Activated CD4-positive, alpha-beta memory T cell treated with anti-CD3 and anti-CD28 coated beads for 36 hours (primary cell): ENCODE measurements at regions of chr5 and their contacts with region 1.

Region 1: DNA sequence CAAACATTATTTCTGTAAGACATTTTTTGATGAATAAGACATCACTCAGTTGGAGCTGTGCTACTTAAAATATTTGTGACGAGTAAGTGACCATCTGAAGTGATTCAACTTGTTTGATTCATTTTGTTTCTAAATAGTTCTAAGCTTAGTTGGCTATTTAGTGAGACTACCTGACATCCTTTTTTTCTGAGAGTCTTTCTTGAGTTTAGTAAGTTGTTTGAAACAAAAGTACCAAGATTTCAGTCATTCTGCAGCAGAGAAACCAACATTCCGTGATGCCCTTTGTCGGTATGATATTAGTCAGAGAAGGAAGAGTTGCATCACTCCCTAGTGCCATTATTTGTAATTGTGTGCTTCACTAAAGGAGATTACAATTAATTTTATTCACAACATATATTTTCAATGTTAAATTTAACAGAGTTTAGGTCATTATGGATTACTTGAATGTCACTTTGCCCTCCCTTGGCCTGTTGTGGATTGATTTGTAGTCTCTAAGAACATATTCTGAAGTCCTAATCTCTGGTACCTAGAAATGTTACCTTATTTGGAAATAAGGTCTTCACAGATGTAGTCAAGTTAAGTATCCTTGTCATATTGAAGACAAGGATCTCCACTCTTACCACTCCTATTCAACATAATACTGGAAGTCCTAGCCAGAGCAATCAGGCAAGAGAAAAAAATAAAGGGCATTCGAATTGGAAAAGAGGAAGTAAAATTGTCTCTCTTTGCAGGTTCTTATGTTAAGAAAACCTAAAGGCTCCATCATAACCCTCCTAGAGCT is 212.2 kb downstream of the PCSK1 start:
- DNase-seq: peak; percentile 37
- H3K4me3 Mint-ChIP-seq: no peak overlapping the region
- H3K27ac Mint-ChIP-seq: peak overlapping the region; percentile 78
- H3K4me1 Mint-ChIP-seq: peaks cover 22% of the 10 kb centered on the region
- H3K27me3 Mint-ChIP-seq: peaks cover 3% of the 10 kb centered on the region

Region 2: GRCh38 chr5:95858661-95859326 is 362.0 kb before region 1 on chr5:
- CTCF ChIA-PET with region 1: no interaction called
- POLR2A ChIA-PET with region 1: no interaction called
- intact Hi-C with region 1: loop called (anchors 1 kb)
- DNase-seq: peak; percentile 97
- H3K4me3 Mint-ChIP-seq: peak overlapping the region; percentile 40
- H3K27ac Mint-ChIP-seq: peak overlapping the region; percentile 68
- H3K4me1 Mint-ChIP-seq: peaks cover 55% of the 10 kb centered on the region
- H3K27me3 Mint-ChIP-seq: no peaks in the 10 kb centered on the region

Region 3: DNA sequence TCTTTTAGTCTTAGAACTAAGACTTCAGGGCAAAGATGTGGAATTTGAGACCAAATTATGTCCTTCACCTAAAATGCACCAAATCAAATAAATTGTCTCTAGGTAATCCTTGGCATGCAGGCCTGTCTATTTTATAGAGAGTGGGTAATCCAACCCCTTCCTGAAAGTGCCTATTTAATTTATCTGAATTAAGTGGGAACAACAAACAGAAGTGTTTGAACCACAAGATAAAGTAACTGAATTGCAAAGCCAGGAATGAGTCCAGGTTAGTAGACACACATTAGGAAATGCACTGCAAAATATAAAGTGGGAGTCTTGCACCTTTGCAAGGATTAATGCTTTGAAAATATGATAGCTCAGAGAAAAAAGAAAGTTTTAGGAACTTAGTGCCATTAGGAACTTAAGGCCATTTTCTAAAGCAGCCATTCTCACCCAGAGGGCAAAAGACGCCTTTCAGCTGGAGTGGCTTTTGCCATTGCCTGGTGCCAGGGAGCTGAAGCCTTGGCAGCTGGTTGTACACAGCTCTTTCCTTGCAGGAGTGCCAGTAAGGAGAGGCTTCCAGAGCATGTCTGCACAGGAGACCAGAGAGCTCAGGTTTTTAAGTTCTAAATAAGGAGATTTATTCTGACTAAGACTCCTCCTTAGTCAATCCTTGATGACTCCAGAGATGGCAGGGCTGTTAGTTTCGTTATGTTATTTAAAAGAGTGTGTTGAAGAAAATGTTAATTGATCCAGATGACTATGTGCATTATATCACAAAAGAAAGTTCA is 107.4 kb before region 1 on chr5:
- CTCF ChIA-PET with region 1: no interaction called
- POLR2A ChIA-PET with region 1: no interaction called
- intact Hi-C with region 1: loop called (anchors 1 kb)
- DNase-seq: peak; percentile 13
- H3K4me3 Mint-ChIP-seq: no peak overlapping the region
- H3K27ac Mint-ChIP-seq: no peak overlapping the region
- H3K4me1 Mint-ChIP-seq: peaks cover 41% of the 10 kb centered on the region
- H3K27me3 Mint-ChIP-seq: peaks cover 4% of the 10 kb centered on the region

Region 4: DNA sequence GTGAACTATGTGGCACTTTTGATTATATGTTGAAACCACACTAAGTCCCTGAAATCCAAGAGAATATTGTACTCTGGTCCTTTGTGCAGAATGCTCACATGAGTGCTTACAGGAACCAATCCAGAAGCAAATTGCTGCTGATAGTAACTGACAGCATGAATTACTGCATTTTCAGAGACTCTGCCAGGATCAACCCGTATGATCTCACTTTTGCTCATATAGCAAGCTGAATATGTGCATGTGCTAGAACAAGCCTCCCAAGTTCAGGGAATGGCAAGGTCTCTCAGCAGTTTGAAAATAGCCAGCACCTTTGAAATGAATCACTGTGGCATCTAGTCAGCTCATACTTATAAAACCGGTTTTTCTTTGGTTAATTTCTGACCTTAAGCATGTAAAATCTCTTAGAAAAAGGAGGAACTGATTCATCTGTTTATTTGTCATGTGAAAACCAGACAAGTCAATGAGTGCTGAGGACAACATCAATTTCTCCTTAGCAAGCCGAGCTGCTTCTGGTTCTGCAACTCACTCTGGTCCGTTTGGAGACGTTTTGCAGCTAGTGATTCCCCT is 43.4 kb before region 1 on chr5:
- CTCF ChIA-PET with region 1: no interaction called
- POLR2A ChIA-PET with region 1: no interaction called
- intact Hi-C with region 1: loop called (anchors 1 kb)
- DNase-seq: peak; percentile 14
- H3K4me3 Mint-ChIP-seq: no peak overlapping the region
- H3K27ac Mint-ChIP-seq: no peak overlapping the region
- H3K4me1 Mint-ChIP-seq: no peaks in the 10 kb centered on the region
- H3K27me3 Mint-ChIP-seq: peaks cover 9% of the 10 kb centered on the region

Region 5: DNA sequence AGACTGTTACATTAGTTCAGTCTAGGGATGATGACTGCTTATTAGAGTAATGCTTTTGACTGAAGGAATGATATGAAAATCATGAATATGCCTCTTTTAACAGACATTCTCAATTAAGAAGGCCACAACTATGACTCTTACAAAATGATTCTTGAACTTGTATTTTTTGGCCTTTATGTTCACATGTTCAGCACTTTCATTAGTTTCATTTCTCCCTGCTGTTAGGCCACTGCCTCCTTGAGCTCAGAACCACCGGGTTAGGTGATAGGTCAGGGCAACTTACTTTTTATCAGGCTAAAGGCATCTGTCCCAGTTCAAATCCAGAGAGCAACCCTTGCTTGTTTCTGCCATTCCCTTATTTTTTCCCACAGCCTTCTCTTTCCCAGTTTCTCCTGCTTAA is 23.9 kb before region 1 on chr5:
- CTCF ChIA-PET with region 1: no interaction called
- POLR2A ChIA-PET with region 1: no interaction called
- intact Hi-C with region 1: no loop called
- DNase-seq: no peak
- H3K4me3 Mint-ChIP-seq: no peak overlapping the region
- H3K27ac Mint-ChIP-seq: no peak overlapping the region
- H3K4me1 Mint-ChIP-seq: no peaks in the 10 kb centered on the region
- H3K27me3 Mint-ChIP-seq: peaks cover 3% of the 10 kb centered on the region

Region 6: GRCh38 chr5:96235008-96235910 is 14.5 kb after region 1 on chr5:
- CTCF ChIA-PET with region 1: no interaction called
- POLR2A ChIA-PET with region 1: no interaction called
- intact Hi-C with region 1: no loop called
- DNase-seq: no peak
- H3K4me3 Mint-ChIP-seq: no peak overlapping the region
- H3K27ac Mint-ChIP-seq: no peak overlapping the region
- H3K4me1 Mint-ChIP-seq: no peaks in the 10 kb centered on the region
- H3K27me3 Mint-ChIP-seq: peaks cover 7% of the 10 kb centered on the region

Region 7: GRCh38 chr5:96288166-96288844 is 67.5 kb after region 1 on chr5:
- CTCF ChIA-PET with region 1: no interaction called
- POLR2A ChIA-PET with region 1: no interaction called
- intact Hi-C with region 1: loop called (anchors 2 kb)
- DNase-seq: no peak
- H3K4me3 Mint-ChIP-seq: no peak overlapping the region
- H3K27ac Mint-ChIP-seq: no peak overlapping the region
- H3K4me1 Mint-ChIP-seq: peaks cover 6% of the 10 kb centered on the region
- H3K27me3 Mint-ChIP-seq: peaks cover 29% of the 10 kb centered on the region